Cardiac septum (tissue), 1 donor: ENCODE measurements at regions of chr19 and their contacts with region 1.

Region 1: GRCh38 chr19:23321948-23322549 is 71.9 kb upstream of the ZNF724 start:
- DNase-seq: no peak

Region 2: GRCh38 chr19:23415561-23416191 is 93.6 kb after region 1 on chr19:
- intact Hi-C with region 1: no loop called
- DNase-seq: no peak

Region 3: GRCh38 chr19:23460641-23461040 is 138.6 kb after region 1 on chr19:
- intact Hi-C with region 1: loop called (anchors 1 kb)
- DNase-seq: no peak